ENCODE measurements at regions of chr4 and their contacts with region 1.

Region 1: GRCh38 chr4:87006676-87007527 is 72.1 kb downstream of the AFF1 start:
- DNase-seq: peak; percentile 85
- ATAC-seq: peak; percentile 85
- H3K4me3 ChIP-seq: peak overlapping the region; percentile 98
- H3K27ac ChIP-seq: peak overlapping the region; percentile 93
- H3K4me1 ChIP-seq: peaks cover 33% of the 10 kb centered on the region
- H3K27me3 ChIP-seq: no peaks in the 10 kb centered on the region
- CTCF ChIP-seq: no peak

Region 2: DNA sequence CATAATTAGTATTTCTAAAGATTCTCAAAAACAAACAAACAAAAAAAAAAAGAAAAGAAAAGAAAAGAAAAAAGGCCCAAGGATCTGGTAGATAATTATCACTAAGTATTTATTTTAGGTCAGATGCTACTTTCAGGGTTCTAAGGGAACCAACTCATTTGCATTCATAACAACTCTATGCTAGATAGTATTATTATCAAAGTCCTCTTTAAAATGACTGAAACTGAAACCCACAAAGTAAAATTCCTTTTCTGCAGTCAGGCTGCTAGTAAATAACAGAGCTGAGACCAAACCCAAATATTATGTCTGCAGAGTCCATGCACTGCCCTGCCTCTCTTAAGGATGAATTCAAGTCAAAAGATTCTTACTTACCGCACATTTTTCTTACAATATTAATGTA is 608.7 kb before region 1 on chr4:
- CTCF ChIA-PET with region 1: no interaction called
- POLR2A ChIA-PET with region 1: interaction called, 13 read pairs
- intact Hi-C with region 1: no loop called
- DNase-seq: no peak
- ATAC-seq: no peak
- H3K4me3 ChIP-seq: no peak overlapping the region
- H3K27ac ChIP-seq: no peak overlapping the region
- H3K4me1 ChIP-seq: no peaks in the 10 kb centered on the region
- H3K27me3 ChIP-seq: no peaks in the 10 kb centered on the region
- CTCF ChIP-seq: no peak

Region 3: DNA sequence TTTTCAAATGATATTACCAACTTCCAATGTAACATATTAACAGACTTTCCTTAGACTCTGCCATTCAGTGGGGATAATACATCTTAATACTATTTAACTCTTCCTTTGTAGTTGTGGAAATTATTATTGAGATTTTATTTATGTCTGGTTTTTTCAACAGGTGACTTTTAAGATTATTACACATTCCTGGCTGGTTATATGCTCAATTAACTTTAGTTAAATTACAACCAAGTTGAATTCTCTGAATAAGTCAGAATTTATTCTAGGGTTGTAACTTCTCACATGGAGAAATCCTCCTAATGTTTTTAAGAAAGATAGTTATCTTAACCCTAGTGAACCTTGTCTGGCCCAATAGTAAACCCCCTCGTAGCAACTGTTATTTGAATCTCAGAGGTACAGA is 265.1 kb before region 1 on chr4:
- CTCF ChIA-PET with region 1: no interaction called
- POLR2A ChIA-PET with region 1: no interaction called
- intact Hi-C with region 1: no loop called
- DNase-seq: no peak
- ATAC-seq: no peak
- H3K4me3 ChIP-seq: no peak overlapping the region
- H3K27ac ChIP-seq: no peak overlapping the region
- H3K4me1 ChIP-seq: peaks cover 15% of the 10 kb centered on the region
- H3K27me3 ChIP-seq: no peaks in the 10 kb centered on the region
- CTCF ChIP-seq: no peak

Region 4: GRCh38 chr4:86921608-86922252 is 85.2 kb before region 1 on chr4:
- CTCF ChIA-PET with region 1: interaction called, 7 read pairs
- POLR2A ChIA-PET with region 1: interaction called, 4 read pairs
- intact Hi-C with region 1: loop called (anchors 1 kb)
- DNase-seq: no peak
- ATAC-seq: no peak
- H3K4me3 ChIP-seq: no peak overlapping the region
- H3K27ac ChIP-seq: no peak overlapping the region
- H3K4me1 ChIP-seq: peaks cover 4% of the 10 kb centered on the region
- H3K27me3 ChIP-seq: no peaks in the 10 kb centered on the region
- CTCF ChIP-seq: no peak

Region 5: DNA sequence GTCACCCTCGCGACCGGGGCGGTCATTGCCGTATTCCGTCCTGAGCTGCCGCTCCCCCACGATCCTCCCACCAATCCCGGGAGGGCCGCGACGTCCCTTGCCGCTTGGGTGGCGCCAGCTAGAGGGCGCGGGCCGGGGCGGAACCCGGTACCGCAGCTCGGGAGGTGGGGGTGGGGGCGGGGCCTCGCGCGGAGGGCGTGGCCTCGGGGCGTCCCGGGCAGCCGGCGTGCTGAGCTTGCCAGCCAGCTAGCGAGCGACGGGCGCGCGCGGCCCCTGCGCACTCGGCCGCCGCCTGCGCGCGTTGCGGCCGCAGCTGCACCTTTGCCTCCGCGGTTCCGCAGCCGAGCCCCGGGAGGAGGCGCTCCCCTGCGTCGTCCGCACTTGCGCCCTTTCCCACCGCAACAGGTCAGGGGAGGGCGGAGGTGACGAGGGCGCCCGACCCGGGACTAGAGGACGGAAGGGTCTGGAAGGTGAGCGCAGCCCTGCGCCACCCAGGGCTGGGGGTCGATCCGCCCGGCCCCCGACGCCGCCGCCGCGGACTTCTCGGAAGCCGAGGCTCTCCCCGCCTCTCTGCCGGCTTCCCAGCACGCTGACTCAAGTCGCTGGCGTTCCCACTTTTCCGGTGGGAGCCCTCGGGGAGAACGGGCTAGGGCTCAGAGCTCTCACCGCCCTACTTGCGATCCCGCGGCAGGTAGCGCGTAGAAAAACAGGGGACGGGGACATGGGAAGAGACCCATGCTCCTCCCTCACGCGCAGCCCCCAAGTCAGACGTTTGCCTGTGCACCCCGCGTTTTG is 71.9 kb before region 1 on chr4 and contains the start of gene AFF1:
- CTCF ChIA-PET with region 1: interaction called, 4 read pairs
- POLR2A ChIA-PET with region 1: interaction called, 15 read pairs
- intact Hi-C with region 1: loop called (anchors 1 kb)
- DNase-seq: peak; percentile 89
- ATAC-seq: peak; percentile 70
- H3K4me3 ChIP-seq: peak within 1 kb of the TSS; percentile 83
- H3K27ac ChIP-seq: peak within 1 kb of the TSS; percentile 87
- H3K4me1 ChIP-seq: peaks cover 29% of the 10 kb centered on the region
- H3K27me3 ChIP-seq: no peaks in the 10 kb centered on the region
- CTCF ChIP-seq: no peak
- total RNA-seq, gene AFF1: 8.1 and 9.4 TPM in 2 replicates

Region 6: DNA sequence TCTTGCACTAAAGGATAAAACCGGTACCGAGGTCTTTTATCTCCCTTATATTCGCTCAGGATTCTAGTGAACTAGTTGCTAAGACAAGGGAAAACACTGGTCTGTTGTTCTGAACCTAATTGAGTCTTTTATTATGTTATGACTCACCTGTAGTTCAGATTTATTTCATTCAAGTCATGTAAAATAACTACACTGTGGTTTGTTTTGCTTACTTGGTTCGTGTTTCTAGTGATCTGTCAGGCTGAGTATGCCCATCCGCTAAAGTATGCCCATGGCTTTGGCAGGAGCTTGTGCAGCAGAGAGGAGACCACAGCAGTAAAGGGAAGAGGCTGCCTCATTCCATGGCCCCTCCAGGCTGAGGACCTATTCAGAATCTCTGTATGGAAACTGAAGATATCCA is 54.1 kb after region 1 on chr4:
- CTCF ChIA-PET with region 1: no interaction called
- POLR2A ChIA-PET with region 1: no interaction called
- intact Hi-C with region 1: loop called (anchors 1 kb)
- DNase-seq: peak; percentile 88
- ATAC-seq: peak; percentile 93
- H3K4me3 ChIP-seq: peak overlapping the region; percentile 12; the same call in 1 of the 2 replicates
- H3K27ac ChIP-seq: peak overlapping the region; percentile 85
- H3K4me1 ChIP-seq: peaks cover 50% of the 10 kb centered on the region
- H3K27me3 ChIP-seq: no peaks in the 10 kb centered on the region
- CTCF ChIP-seq: no peak

Region 7: DNA sequence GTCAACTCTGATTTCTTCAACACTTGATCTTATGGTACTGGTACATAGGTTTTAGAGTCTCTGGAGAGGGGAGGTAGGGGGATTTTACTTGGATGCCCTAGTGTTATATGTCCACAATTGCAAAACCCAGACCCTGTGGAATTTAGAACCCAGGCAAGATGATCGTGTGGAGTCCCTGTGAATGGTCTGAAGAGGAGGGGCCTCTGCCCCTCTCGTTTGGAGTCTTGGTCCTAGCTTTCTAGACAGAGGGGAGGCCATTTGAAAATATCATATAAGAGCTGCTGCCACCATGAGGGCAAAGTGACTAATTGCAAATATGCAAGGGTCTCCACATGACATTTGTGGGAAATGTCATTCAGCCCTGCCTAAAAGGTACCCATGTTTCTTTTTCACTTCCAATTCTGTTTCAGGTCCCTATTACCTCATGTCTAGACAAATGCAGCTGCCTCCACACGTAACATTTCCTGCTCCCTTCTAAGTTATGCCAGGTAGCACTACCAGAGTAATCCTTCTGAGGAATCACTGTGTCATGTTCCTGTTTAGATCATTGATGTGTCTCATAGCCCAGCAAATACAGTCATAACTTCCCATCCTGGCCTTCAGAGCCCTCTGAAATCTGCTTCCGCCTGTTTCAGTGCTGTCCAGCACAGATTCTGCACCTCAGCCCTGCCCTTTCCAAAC is 86.7 kb after region 1 on chr4:
- CTCF ChIA-PET with region 1: interaction called, 3 read pairs
- POLR2A ChIA-PET with region 1: interaction called, 5 read pairs
- intact Hi-C with region 1: loop called (anchors 1 kb)
- DNase-seq: peak; percentile 72
- ATAC-seq: peak; percentile 39
- H3K4me3 ChIP-seq: peak overlapping the region; percentile 28; the same call in 1 of the 2 replicates
- H3K27ac ChIP-seq: peak overlapping the region; percentile 87
- H3K4me1 ChIP-seq: peaks cover 41% of the 10 kb centered on the region
- H3K27me3 ChIP-seq: no peaks in the 10 kb centered on the region
- CTCF ChIP-seq: peak; percentile 69

Region 8: DNA sequence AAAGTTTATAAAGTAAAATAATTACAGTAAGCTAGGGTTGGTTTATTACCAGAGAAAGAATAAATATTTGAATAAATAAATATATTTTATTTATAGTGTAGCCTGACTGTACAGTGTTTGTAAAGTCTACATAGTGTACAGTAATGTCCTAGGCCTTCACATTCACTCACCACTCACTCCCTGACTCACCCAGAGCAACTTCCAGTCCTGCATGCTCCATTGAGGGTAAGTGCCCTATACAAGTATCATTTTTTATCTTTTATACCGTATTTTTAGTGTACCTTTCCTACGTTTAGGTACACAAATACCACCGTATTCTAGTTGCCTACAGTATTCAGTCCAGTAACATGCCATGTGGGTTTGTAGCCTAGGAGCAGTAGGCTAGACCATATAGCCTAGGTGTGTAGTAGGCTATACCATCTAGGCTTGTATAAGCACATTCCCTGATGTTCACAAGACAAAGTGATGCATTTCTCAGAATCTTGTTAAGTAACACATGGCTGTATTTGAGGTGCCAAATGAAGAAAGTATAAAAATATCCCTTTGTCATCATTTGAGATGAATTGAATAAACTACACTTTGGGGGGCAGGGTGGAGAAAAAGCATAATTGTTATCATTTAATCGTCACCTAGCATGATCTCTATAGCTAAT is 228.2 kb after region 1 on chr4:
- CTCF ChIA-PET with region 1: no interaction called
- POLR2A ChIA-PET with region 1: no interaction called
- intact Hi-C with region 1: loop called (anchors 5 kb)
- DNase-seq: peak; percentile 41
- ATAC-seq: peak; percentile 75
- H3K4me3 ChIP-seq: peak overlapping the region; percentile 73
- H3K27ac ChIP-seq: peak overlapping the region; percentile 57
- H3K4me1 ChIP-seq: peaks cover 27% of the 10 kb centered on the region
- H3K27me3 ChIP-seq: no peaks in the 10 kb centered on the region
- CTCF ChIP-seq: no peak